ENCODE measurements at regions of chr10 and their contacts with region 1.

Region 1: DNA sequence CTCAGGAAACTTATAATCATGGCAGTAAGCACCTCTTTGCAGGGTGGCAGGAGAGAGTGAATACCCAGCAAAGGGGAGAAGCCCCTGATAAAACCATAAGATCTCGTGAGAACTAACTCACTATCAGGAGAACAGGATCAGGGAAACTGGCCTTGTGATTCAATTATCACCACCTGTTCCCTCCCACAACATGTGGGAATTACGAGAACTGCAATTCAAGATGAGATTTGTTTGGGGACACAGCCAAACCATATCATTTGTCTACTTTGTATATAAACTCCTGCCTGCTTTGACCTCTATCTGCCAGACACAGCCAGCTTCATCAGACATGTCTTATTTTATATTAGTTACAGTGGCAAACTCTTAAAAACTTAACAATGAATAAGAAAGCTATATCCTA is 50.4 kb downstream of the ARMC3 start:
- DNase-seq: no peak
- H3K4me3 ChIP-seq: no peak overlapping the region
- H3K27ac ChIP-seq: no peak overlapping the region
- H3K4me1 ChIP-seq: no peaks in the 10 kb centered on the region
- H3K27me3 ChIP-seq: peaks cover 8 to 35% of the 10 kb centered on the region in 2 experiments
- CTCF ChIP-seq: no peak
- POLR2A ChIP-seq: no peak

Region 2: DNA sequence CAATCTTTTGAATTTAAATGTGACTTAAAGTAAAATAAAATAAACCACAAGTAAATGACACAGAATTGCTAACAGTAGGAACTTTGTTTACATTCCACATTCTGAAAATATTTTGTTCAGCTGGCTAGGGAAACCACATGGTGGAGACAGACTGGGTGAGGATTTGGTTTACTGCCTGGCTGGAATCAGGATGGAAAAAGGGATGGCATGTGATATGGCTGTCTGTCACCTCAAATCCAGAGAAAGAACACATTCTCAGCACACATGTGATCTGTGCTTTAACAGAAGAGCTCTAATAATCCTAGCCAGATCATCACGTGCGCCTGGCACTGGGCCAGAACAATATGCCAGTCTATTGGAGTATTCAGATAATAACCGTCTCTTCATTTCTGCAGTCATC is 173.0 kb before region 1 on chr10:
- CTCF ChIA-PET with region 1: no interaction called
- POLR2A ChIA-PET with region 1: no interaction called
- dilution Hi-C with region 1: no loop called
- intact Hi-C with region 1: loop called (anchors 10 kb)
- DNase-seq: peak; percentile 31
- H3K4me3 ChIP-seq: no peak overlapping the region
- H3K27ac ChIP-seq: no peak overlapping the region
- H3K4me1 ChIP-seq: no peaks in the 10 kb centered on the region
- H3K27me3 ChIP-seq: peaks cover 13 to 20% of the 10 kb centered on the region in 2 experiments
- CTCF ChIP-seq: no peak
- POLR2A ChIP-seq: no peak

Region 3: GRCh38 chr10:23067939-23068775 is 89.9 kb after region 1 on chr10:
- CTCF ChIA-PET with region 1: no interaction called
- POLR2A ChIA-PET with region 1: no interaction called
- dilution Hi-C with region 1: no loop called
- intact Hi-C with region 1: no loop called
- DNase-seq: peak; percentile 65
- H3K4me3 ChIP-seq: no peak overlapping the region
- H3K27ac ChIP-seq: no peak overlapping the region
- H3K4me1 ChIP-seq: no peaks in the 10 kb centered on the region
- H3K27me3 ChIP-seq: no peaks in the 10 kb centered on the region
- CTCF ChIP-seq: peak; percentile 70 to 83
- POLR2A ChIP-seq: no peak

Measured in endothelial cell of umbilical vein (primary cell).